ENCODE measurements at regions of chr2 and their contacts with region 1.

Region 1: DNA sequence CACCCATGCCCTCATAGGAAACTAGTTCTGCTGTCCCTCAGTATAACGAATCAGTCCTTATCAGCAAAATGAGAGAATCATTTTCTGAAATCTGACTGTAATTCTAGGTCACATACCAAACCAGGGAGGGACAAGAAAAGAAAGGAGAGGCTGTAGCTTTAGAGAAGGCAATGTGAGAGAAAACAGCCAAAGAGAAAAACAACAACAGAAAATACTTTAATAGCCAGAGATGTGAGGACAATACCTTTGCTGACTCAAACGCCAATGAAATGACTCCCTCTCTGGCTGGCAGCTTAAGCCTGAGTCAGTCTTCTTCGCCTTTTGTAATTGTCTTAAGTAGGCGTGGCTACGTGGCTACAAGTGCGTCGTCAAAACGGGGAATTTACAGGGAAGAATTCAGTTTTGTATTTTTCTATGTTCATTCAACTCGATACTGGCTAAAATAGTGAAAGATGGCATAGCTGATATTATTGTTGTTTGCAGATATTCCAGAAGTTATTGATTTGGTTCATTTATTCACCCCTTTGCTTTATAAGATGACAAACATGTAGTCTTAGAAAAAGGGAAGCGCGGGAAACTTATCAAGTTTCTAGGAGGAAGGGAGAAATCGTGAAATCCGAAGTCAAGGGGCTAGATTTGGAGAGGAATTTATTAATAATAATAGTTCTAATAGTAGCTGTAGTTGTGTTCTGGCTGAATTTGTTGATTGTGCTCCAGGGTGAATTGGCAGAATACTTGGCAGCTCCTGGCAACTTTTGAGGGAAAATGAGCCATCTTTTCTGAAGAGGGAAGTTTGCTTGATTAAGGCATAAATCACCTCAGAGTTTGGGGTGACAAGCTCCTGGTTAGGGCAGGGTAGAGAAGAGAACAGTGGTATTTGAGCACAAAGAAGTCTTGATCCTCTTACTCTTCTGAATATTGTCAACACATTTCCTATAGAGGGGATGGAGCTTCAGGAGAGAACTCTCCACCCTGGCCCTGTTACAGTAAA is at the start of gene IL1A:
- DNase-seq: peak; percentile 93
- H3K4me3 ChIP-seq: peak within 1 kb of the TSS; percentile 51 to 55 (median 54)
- H3K27ac ChIP-seq: peak within 1 kb of the TSS; percentile 92
- H3K4me1 ChIP-seq: peaks cover 24% of the 10 kb centered on the region
- H3K27me3 ChIP-seq: no peaks in the 10 kb centered on the region
- CTCF ChIP-seq: no peak
- total RNA-seq, gene IL1A: 17.5 to 184 TPM

Region 2: GRCh38 chr2:112481050-112481527 is 303.4 kb before region 1 on chr2:
- CTCF ChIA-PET with region 1: no interaction called
- dilution Hi-C with region 1: no loop called
- in situ Hi-C with region 1: no loop called
- intact Hi-C with region 1: no loop called
- DNase-seq: peak; percentile 80
- H3K4me3 ChIP-seq: peak overlapping the region; percentile 58 to 84 (median 76)
- H3K27ac ChIP-seq: peak overlapping the region; percentile 46
- H3K4me1 ChIP-seq: peaks cover 16% of the 10 kb centered on the region
- H3K27me3 ChIP-seq: no peaks in the 10 kb centered on the region
- CTCF ChIP-seq: peak; percentile 71 to 94

Region 3: GRCh38 chr2:112803691-112804521 is 19.4 kb after region 1 on chr2:
- CTCF ChIA-PET with region 1: no interaction called
- dilution Hi-C with region 1: no loop called
- in situ Hi-C with region 1: no loop called
- intact Hi-C with region 1: loop called (anchors 1 kb)
- DNase-seq: peak; percentile 93
- H3K4me3 ChIP-seq: no peak overlapping the region
- H3K27ac ChIP-seq: peak overlapping the region; percentile 99
- H3K4me1 ChIP-seq: peaks cover 36% of the 10 kb centered on the region
- H3K27me3 ChIP-seq: no peaks in the 10 kb centered on the region
- CTCF ChIP-seq: no peak

Region 4: GRCh38 chr2:112814278-112814677 is 29.8 kb after region 1 on chr2:
- CTCF ChIA-PET with region 1: no interaction called
- dilution Hi-C with region 1: no loop called
- in situ Hi-C with region 1: no loop called
- intact Hi-C with region 1: loop called (anchors 2 kb)
- DNase-seq: peak; percentile 93
- H3K4me3 ChIP-seq: no peak overlapping the region
- H3K27ac ChIP-seq: peak overlapping the region; percentile 91
- H3K4me1 ChIP-seq: peaks cover 53% of the 10 kb centered on the region
- H3K27me3 ChIP-seq: no peaks in the 10 kb centered on the region
- CTCF ChIP-seq: peak; percentile 4 to 27

Region 5: DNA sequence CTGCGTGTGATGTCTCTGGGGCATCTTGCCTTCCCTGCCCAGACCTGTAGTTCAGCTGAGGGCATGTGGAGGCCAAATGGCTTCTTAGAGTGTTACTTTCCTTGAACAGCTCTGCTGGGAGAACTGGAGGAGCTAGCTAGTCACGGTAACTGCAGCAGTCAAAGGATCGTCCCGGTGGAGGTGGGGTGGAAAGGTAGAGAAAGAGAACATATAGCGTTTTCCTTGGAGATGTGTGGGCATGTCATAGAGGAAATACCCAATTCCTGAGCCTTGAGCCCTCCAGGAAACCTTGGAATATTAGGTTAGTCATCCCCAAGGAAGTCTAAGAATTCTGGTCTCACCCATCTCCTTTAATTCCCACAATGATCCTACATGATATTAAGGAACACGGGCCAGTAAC is 92.9 kb after region 1 on chr2:
- CTCF ChIA-PET with region 1: interaction called, 4 read pairs
- dilution Hi-C with region 1: no loop called
- in situ Hi-C with region 1: no loop called
- intact Hi-C with region 1: loop called (anchors 2 kb)
- DNase-seq: peak; percentile 94
- H3K4me3 ChIP-seq: no peak overlapping the region
- H3K27ac ChIP-seq: peak overlapping the region; percentile 97
- H3K4me1 ChIP-seq: peaks cover 72% of the 10 kb centered on the region
- H3K27me3 ChIP-seq: no peaks in the 10 kb centered on the region
- CTCF ChIP-seq: no peak

Region 6: GRCh38 chr2:112884869-112885505 is 100.5 kb after region 1 on chr2:
- CTCF ChIA-PET with region 1: interaction called, 4 read pairs
- dilution Hi-C with region 1: no loop called
- in situ Hi-C with region 1: no loop called
- intact Hi-C with region 1: loop called (anchors 1 kb)
- DNase-seq: peak; percentile 44
- H3K4me3 ChIP-seq: no peak overlapping the region
- H3K27ac ChIP-seq: no peak overlapping the region
- H3K4me1 ChIP-seq: peaks cover 43% of the 10 kb centered on the region
- H3K27me3 ChIP-seq: no peaks in the 10 kb centered on the region
- CTCF ChIP-seq: peak; percentile 79 to 93